Sigmoid colon (tissue), 7 donors: ENCODE measurements at regions of chr2 and their contacts with region 1.

Region 1: GRCh38 chr2:112121682-112122254 is 16.4 kb upstream of the FBLN7 start:
- DNase-seq: no peak
- H3K4me3 ChIP-seq: no peak overlapping the region
- H3K27ac ChIP-seq: no peak overlapping the region
- H3K4me1 ChIP-seq: no peaks in the 10 kb centered on the region
- H3K27me3 ChIP-seq: no peaks in the 10 kb centered on the region
- CTCF ChIP-seq: peak in 1 of 4 experiments; percentile 41
- EP300 ChIP-seq: no peak
- POLR2A ChIP-seq: no peak

Region 2: DNA sequence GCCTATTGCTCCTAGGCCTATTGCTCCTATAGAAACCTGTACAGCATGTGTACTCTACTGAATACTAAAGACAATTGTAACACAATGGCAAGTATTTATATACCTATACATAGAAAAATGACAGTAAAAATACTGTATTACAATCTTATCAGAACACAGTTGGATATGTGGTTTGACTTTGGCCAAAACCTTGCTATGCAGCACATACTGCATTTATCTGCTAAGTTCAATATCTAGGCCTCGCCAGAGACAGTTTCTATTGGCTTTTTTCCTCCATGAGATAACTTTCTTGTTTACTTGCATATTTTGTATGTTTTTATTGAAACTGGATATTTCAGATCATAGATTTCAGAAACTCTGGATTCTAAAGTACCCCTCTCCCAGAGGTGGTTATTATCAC is 86.0 kb before region 1 on chr2:
- intact Hi-C with region 1: no loop called
- DNase-seq: no peak
- H3K4me3 ChIP-seq: no peak overlapping the region
- H3K27ac ChIP-seq: no peak overlapping the region
- H3K4me1 ChIP-seq: peaks cover 0 to 29% (median 6%) of the 10 kb centered on the region in 4 donors
- H3K27me3 ChIP-seq: no peaks in the 10 kb centered on the region
- CTCF ChIP-seq: no peak
- EP300 ChIP-seq: no peak
- POLR2A ChIP-seq: no peak

Region 3: DNA sequence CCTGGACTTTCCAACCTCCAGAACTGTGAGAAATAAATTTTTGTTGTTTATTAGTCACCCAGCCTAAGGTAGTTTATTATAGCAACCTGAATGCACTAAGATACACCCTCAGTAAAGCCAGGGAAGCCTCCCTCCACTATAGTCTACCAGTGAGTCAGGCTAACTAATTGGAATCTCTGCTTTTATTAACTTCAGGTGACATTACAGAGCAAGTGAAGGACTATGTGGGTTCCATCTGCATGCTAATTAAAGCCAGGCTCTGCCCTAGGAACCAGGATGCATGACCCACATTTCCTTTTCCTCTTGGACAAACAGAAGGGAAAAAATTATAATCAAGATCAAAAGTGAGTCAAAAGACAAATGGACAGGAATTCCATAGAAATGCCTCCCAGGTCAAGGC is 77.0 kb after region 1 on chr2:
- intact Hi-C with region 1: no loop called
- DNase-seq: no peak
- H3K4me3 ChIP-seq: no peak overlapping the region
- H3K27ac ChIP-seq: no peak overlapping the region
- H3K4me1 ChIP-seq: no peaks in the 10 kb centered on the region
- H3K27me3 ChIP-seq: no peaks in the 10 kb centered on the region
- CTCF ChIP-seq: no peak
- EP300 ChIP-seq: no peak
- POLR2A ChIP-seq: no peak

Region 4: DNA sequence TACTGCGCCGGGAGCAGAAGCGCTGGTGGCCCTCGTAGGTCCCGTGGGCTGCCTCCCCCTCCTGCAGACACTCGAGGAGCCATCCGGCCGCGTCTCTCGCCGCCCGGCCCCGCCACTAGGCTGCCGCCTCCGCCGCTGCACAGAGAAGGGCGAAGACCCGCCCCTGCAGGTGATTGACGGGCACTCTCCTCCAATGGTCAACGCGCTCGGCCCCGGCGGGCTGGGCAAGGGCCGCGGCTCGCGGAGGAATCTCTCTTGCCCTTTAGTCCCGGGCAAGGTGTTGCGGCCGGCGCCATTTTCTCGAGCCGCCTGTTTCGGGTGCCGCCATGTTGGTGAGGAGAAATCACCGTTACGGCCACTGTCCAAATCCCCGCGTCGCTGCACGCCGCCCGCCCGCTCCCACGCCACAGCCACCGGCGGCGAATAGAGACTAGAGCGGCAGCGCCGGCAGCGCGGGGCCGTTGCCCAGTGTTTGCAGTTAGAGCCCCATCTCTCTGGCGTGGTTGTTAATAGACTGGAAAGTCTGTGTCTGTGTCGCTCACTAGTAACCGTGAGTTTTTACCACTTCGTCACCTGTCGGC is 153.6 kb after region 1 on chr2 and contains the start of gene ZC3H6:
- intact Hi-C with region 1: no loop called
- DNase-seq: peak; percentile 99
- H3K4me3 ChIP-seq: peak within 1 kb of the TSS; percentile 68 to 97 (median 89)
- H3K27ac ChIP-seq: peak within 1 kb of the TSS; percentile 95 to 100 (median 99)
- H3K4me1 ChIP-seq: peaks cover 0 to 14% (median 6%) of the 10 kb centered on the region in 4 donors
- H3K27me3 ChIP-seq: no peaks in the 10 kb centered on the region
- CTCF ChIP-seq: peak in 1 of 4 experiments; percentile 36
- EP300 ChIP-seq: peak in 1 of 4 donors; percentile 13
- POLR2A ChIP-seq: peak; percentile 91 to 94
- total RNA-seq, gene ZC3H6: 13.2 to 27.1 (median 16.5) TPM

Region 5: DNA sequence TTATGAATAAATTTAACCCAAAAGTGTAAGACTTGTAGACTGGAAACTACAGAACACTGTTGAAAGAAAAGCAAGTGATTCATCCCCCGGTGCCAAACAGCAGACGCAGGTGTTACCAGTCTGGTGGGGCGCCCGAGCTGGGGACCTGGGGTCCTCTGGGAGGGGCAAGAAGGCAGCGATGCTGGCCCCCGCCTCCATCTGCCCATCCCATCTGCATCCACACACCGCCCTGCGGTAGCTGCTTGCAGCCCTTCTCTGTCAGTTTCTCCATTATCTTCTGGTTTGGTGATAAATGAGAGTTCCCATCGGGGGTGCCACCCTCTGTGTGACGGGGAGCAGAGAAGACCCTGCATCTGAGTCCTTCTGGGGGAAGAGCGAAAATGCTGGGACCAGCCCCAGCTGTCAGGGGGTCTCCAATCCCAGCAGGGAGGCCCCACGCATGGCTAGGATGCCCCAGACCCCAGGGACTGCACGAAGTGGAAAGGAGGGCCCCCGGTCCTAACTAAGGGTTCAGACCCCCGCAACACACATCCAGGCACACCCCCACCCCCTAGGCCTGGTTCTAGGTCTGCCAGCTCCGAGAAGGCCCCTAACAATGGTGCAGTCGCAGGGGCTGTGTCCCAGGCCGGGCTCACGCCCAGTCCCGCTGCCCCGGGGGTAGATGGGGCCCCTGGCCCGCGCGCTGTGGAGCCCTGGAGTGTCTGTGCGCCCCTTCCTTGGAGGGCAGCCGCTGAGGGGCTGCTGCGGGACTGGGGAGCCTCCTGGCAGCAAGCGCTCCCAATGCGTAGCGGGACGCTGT is 312.4 kb after region 1 on chr2:
- intact Hi-C with region 1: loop called (anchors 5 kb)
- DNase-seq: peak; percentile 61
- H3K4me3 ChIP-seq: no peak overlapping the region
- H3K27ac ChIP-seq: no peak overlapping the region
- H3K4me1 ChIP-seq: peaks cover 0 to 11% (median 9%) of the 10 kb centered on the region in 4 donors
- H3K27me3 ChIP-seq: peaks cover 0 to 3% (median 0%) of the 10 kb centered on the region in 3 donors
- CTCF ChIP-seq: no peak
- EP300 ChIP-seq: no peak
- POLR2A ChIP-seq: no peak

Region 6: DNA sequence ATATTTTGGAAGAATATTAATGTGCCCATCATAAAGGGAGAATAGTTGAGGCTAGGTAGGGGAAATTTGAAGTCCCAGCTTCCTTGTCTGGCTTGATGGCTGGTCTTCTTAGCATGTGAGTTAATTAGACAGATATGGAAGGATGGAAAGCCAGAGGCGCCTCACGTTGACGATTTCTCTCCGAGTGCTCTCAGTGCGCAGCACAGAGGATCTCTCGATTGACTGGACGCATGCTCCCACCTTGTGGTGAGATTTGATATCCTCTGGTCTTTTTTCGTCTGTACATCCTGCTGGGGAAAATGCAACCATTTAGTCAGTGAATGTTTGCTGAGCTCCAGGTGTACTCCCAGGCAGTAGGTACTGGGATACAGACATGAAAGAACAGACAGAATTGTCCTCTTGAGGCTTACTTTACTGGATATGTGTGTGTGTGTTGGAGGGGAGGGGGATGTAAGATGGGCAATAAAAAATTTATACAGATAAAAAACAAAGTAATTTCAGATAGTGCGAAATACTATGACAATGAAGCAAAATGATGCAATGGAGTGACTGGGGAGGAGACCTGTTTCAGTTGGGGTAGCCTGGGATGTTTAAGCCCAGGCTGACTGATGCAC is 1248.8 kb after region 1 on chr2:
- intact Hi-C with region 1: no loop called
- DNase-seq: peak; percentile 81
- H3K4me3 ChIP-seq: no peak overlapping the region
- H3K27ac ChIP-seq: no peak overlapping the region
- H3K4me1 ChIP-seq: peaks cover 0 to 5% (median 0%) of the 10 kb centered on the region in 4 donors
- H3K27me3 ChIP-seq: no peaks in the 10 kb centered on the region
- CTCF ChIP-seq: peak; percentile 60 to 82 (median 75)
- EP300 ChIP-seq: no peak
- POLR2A ChIP-seq: no peak